Activated CD4-positive, alpha-beta memory T cell treated with anti-CD3 and anti-CD28 coated beads, Interleukin-2, amount 10 ng/mL, durations not matched to agents 7 days and 5 days (primary cell): ENCODE measurements at regions of chr7 and their contacts with region 1.

Region 1: GRCh38 chr7:2354186-2354938 is at the start of gene EIF3B:
- DNase-seq: peak; percentile 90
- H3K4me3 Mint-ChIP-seq: peak within 1 kb of the TSS; percentile 91
- H3K27ac Mint-ChIP-seq: peak within 1 kb of the TSS; percentile 100
- H3K4me1 Mint-ChIP-seq: peaks cover 31% of the 10 kb centered on the region
- H3K27me3 Mint-ChIP-seq: no peaks in the 10 kb centered on the region
- total RNA-seq, gene EIF3B: 135 to 138 TPM

Region 2: GRCh38 chr7:2241580-2242540 is 112.5 kb before region 1 on chr7 and contains the starts of genes MRM2 and NUDT1:
- CTCF ChIA-PET with region 1: no interaction called
- POLR2A ChIA-PET with region 1: interaction called, 10 read pairs
- DNase-seq: peak; percentile 78
- H3K4me3 Mint-ChIP-seq: peak within 1 kb of the TSS; percentile 92
- H3K27ac Mint-ChIP-seq: peak within 1 kb of the TSS; percentile 85
- H3K4me1 Mint-ChIP-seq: peaks cover 47% of the 10 kb centered on the region
- H3K27me3 Mint-ChIP-seq: no peaks in the 10 kb centered on the region
- total RNA-seq, gene MRM2: 23.6 to 25.7 TPM
- total RNA-seq, gene NUDT1: 85.2 to 87.5 TPM

Region 3: DNA sequence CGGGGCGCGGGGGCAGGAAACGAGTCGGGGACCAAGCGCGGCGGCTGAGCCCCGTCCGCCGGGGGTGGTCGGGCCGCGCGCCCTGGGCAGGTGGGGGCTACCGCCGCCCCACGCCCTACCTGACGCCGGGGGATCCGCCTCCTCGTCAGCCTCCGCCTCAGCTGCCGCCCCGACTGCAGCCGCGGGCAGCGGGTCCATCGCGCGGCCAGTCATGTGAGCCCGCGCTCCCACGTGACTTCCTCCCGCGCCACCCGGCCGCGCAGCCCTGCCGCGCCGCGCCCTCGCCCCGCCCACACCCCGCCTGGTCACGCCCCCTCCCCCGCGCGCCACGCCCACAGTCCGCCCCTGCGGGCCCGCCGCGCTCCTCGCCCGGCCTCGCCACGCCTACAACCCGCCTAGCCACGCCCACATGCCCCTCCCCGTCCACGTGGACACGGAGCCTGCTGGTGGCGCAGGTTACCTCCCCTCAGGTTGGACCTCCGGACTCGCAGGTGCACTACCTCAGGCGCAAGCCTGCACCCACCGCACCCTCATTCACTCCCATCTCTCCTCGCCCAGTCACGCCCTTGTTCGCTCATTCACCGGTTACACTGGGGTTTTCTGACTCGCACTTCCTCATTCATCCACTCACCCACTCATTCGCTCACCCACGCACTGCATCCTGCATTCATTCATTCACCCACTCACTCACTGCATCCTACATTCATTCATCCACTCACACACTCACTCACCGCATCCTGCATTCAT is 40.0 kb before region 1 on chr7 and contains the start of gene SNX8:
- CTCF ChIA-PET with region 1: no interaction called
- POLR2A ChIA-PET with region 1: interaction called, 10 read pairs
- DNase-seq: peak; percentile 95
- H3K4me3 Mint-ChIP-seq: no peak within 1 kb of the TSS
- H3K27ac Mint-ChIP-seq: peak within 1 kb of the TSS; percentile 76
- H3K4me1 Mint-ChIP-seq: peaks cover 20% of the 10 kb centered on the region
- H3K27me3 Mint-ChIP-seq: no peaks in the 10 kb centered on the region
- total RNA-seq, gene SNX8: 22.4 to 26.8 TPM

Region 4: DNA sequence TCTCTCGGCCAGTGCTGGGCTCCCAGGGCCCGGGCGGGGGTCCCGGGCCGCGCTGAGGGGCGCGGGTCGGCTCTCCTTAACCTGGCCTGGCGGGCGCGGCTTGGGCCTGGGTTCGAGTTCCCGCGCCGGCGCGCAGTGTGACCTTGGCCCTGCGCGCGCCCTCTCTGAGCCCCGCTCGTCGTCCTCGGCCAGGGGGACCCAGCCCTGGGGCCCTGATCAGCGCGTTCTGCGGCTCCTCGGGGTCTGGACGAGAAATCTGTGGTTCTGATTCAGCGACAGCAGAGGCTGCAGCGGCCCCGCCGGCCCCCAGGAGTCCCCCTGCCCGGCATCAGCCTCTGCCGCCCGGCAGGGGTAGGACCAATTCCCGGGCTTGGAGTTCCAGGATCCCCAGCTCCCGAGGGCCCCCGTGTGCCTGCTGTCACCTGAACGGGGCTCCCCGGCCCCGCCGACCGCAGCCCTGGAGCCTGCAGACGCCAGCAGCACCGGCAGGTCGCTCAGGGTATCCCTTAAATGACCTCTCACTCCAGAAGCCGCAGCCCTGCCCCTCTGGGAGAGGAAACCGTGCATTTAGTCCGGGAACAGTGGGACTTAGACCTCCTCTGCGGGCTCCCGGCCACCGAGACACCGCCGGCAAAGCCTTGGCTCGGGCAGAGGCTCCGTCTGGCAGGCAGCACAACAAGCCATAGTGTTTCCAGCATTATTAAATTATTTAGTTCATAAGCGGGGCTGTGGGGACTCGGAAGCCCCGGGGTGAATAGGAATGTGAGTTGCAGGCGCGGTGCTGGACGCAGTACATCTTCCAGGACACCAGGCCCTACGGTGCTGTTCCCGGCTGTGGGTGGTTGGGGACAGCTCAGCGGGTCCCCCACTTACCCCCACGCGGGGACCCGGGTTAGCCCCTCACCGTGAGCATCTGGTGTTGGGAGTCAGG is 49.6 kb after region 1 on chr7:
- CTCF ChIA-PET with region 1: interaction called, 8 read pairs
- POLR2A ChIA-PET with region 1: interaction called, 39 read pairs
- DNase-seq: peak; percentile 37
- H3K4me3 Mint-ChIP-seq: peak overlapping the region; percentile 88
- H3K27ac Mint-ChIP-seq: peak overlapping the region; percentile 99
- H3K4me1 Mint-ChIP-seq: peaks cover 60% of the 10 kb centered on the region
- H3K27me3 Mint-ChIP-seq: no peaks in the 10 kb centered on the region

Region 5: DNA sequence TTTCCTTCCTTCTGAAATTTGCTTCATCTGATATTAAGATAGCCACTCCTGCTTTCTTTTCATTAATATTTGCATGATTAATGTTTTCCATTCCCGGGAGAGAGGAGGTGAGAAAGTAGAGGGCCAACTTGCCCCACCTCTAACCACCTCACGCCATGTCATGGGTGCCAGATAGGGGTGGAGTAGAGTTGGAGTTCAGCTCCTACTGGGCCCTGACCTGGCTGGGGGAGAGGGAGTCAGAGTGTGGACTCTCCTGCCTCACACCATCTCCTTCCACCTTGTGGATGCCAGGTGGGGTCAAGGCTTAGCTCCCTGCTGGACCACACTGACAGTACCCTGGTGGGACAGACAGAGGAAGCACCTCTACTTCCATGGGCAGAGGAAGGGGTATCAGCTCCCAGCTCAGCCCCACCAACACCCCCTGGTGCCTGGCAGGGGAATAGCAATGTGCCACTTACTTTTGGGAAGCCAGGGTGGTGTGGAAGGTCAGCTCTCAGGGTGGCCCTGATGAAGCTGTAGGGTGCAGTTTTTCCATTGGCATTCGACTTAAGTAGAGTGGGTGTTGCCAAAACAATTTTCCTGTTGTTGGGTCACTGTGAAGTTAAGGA is 77.0 kb after region 1 on chr7:
- CTCF ChIA-PET with region 1: interaction called, 11 read pairs
- POLR2A ChIA-PET with region 1: no interaction called
- DNase-seq: peak; percentile 50
- H3K4me3 Mint-ChIP-seq: no peak overlapping the region
- H3K27ac Mint-ChIP-seq: no peak overlapping the region
- H3K4me1 Mint-ChIP-seq: peaks cover 30% of the 10 kb centered on the region
- H3K27me3 Mint-ChIP-seq: no peaks in the 10 kb centered on the region